Breast epithelium (tissue), 4 donors: ENCODE measurements at regions of chr2 and their contacts with region 1.

Region 1: GRCh38 chr2:96554293-96555145 is 18.0 kb downstream of the ARID5A start:
- DNase-seq: peak; percentile 68 to 78
- H3K4me3 ChIP-seq: peak overlapping the region in 2 of 3 donors; percentile 33 to 36
- H3K27ac ChIP-seq: peak overlapping the region; percentile 75 to 77
- H3K4me1 ChIP-seq: peaks cover 0 to 2% of the 10 kb centered on the region in 2 donors
- H3K27me3 ChIP-seq: no peaks in the 10 kb centered on the region
- CTCF ChIP-seq: peak; percentile 92 to 98 (median 97)
- POLR2A ChIP-seq: no peak

Region 2: GRCh38 chr2:96584017-96584416 is 29.5 kb after region 1 on chr2:
- intact Hi-C with region 1: no loop called
- DNase-seq: no peak
- H3K4me3 ChIP-seq: no peak overlapping the region
- H3K27ac ChIP-seq: no peak overlapping the region
- H3K4me1 ChIP-seq: no peaks in the 10 kb centered on the region
- H3K27me3 ChIP-seq: no peaks in the 10 kb centered on the region
- CTCF ChIP-seq: no peak
- POLR2A ChIP-seq: no peak

Region 3: GRCh38 chr2:97834610-97835009 is 1280.1 kb after region 1 on chr2:
- intact Hi-C with region 1: loop called (anchors 5 kb)
- DNase-seq: no peak
- H3K4me3 ChIP-seq: no peak overlapping the region
- H3K27ac ChIP-seq: no peak overlapping the region
- H3K4me1 ChIP-seq: no peaks in the 10 kb centered on the region
- H3K27me3 ChIP-seq: no peaks in the 10 kb centered on the region
- CTCF ChIP-seq: no peak
- POLR2A ChIP-seq: no peak

Region 4: GRCh38 chr2:97885841-97886240 is 1331.3 kb after region 1 on chr2:
- intact Hi-C with region 1: no loop called
- DNase-seq: no peak
- H3K4me3 ChIP-seq: no peak overlapping the region
- H3K27ac ChIP-seq: no peak overlapping the region
- H3K4me1 ChIP-seq: no peaks in the 10 kb centered on the region
- H3K27me3 ChIP-seq: no peaks in the 10 kb centered on the region
- CTCF ChIP-seq: no peak
- POLR2A ChIP-seq: no peak